Activated CD4-positive, alpha-beta memory T cell treated with anti-CD3 and anti-CD28 coated beads, Interleukin-2, amount 10 ng/mL, durations not matched to agents 7 days and 5 days (primary cell): ENCODE measurements at regions of chr9 and their contacts with region 1.

Region 1: GRCh38 chr9:120898396-120898795 is 21.4 kb upstream of the PHF19 start:
- DNase-seq: no peak
- H3K4me3 Mint-ChIP-seq: no peak overlapping the region
- H3K27ac Mint-ChIP-seq: peak overlapping the region; percentile 66
- H3K4me1 Mint-ChIP-seq: peaks cover 77% of the 10 kb centered on the region
- H3K27me3 Mint-ChIP-seq: no peaks in the 10 kb centered on the region

Region 2: DNA sequence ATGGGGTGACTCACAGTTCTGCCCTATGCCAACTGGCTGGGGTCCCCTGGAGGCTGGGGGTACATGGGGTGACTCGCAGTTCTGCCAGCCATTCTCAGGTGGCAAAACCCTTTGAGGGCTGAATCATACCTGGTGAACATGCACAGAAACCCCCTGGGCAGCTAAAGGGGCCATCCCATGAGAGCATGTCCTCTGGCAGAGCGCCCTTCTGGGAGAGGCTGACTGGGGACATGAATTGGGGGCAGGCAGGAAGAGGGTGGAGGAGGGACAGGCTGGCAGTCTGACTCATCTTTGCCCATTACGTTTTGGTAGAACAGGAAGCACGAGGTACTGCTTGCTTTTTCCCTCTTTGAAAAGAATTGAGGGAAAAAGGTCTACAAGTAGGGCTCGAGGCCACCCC is 11.5 kb after region 1 on chr9:
- CTCF ChIA-PET with region 1: interaction called, 9 read pairs
- POLR2A ChIA-PET with region 1: interaction called, 121 read pairs
- DNase-seq: peak; percentile 47
- H3K4me3 Mint-ChIP-seq: no peak overlapping the region
- H3K27ac Mint-ChIP-seq: peak overlapping the region; percentile 83
- H3K4me1 Mint-ChIP-seq: peaks cover 89% of the 10 kb centered on the region
- H3K27me3 Mint-ChIP-seq: no peaks in the 10 kb centered on the region